Activated CD4-positive, alpha-beta T cell treated with anti-CD3 and anti-CD28 coated beads, Interleukin-2, amount 10 ng/mL, durations not matched to agents 7 days and 5 days (primary cell): ENCODE measurements at regions of chr17 and their contacts with region 1.

Region 1: DNA sequence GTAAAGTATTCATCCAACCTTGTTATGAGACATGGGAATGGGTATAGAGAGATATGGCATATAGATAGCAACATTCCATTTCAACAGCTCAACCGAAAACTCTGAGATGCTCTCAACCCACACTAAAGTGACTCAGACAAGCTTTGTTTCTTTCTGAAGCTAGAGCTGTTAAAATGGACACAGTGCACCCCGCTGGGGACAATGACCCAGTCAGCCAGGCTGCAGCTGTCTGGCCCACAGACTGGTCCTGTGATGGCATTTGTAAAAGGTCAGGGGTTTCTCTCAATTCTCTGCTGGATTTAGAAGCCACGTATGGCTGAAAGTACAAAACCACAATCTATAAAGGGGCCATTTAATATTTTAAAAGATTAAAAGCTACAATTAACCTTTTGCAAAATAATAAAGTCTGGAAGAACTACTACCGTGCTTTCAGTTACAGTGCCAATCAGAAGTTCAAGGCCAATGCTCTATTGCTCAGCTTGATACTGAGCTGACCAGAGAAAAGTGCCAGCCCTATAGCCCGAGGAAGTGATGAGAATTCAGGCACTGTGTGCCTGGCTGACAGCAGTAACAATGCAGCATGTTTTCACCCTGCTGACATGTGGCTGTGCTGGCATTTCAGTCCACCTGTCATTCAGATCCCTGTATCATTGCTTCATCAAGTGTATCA is 60.2 kb downstream of the TEX2 start:
- DNase-seq: no peak
- H3K4me3 Mint-ChIP-seq: no peak overlapping the region
- H3K27ac Mint-ChIP-seq: no peak overlapping the region
- H3K4me1 Mint-ChIP-seq: peaks cover 22% of the 10 kb centered on the region
- H3K27me3 Mint-ChIP-seq: no peaks in the 10 kb centered on the region

Region 2: DNA sequence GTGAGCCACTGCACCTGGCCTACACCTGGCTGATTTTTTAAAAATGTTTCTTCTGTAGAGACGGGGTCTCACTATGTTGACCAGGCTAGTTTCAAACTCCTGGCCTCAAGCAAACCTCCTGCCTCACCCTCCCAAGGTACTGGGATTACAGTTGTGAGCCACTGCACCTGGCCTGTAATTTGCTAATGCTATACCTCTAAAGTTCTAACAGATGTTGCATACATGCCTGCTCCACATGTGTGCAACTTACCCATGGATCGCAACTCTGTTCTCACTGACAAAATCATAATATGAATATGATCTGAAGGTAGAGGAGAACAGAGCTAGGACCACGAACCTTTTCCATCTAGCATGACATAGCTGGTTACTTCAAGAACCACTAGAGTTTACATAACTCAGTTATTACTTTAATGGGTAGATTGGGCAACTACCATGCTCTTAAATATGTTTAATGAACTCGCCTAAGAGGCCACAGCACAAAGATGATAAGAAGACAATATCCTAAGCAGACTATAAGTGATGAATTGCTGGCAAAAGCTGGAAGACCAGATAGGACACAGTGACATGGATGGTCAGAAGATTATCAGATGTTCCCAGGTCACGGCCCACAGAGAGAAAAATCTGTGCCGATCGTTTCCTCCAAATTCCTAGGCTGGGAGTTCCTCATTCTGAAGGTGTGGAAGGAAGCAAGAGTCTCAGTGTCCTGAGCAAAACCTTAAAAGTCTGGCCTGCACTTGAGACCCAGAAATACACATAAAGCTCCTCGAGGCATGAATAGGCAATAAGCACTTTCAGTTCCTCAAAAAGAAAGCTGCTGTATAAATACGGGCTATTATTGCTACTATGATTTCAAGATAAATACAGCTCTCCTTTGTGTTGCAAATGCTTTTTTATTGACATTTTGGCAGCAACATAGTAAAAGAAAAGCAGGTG is 128.8 kb before region 1 on chr17:
- CTCF ChIA-PET with region 1: no interaction called
- POLR2A ChIA-PET with region 1: no interaction called
- DNase-seq: no peak
- H3K4me3 Mint-ChIP-seq: no peak overlapping the region
- H3K27ac Mint-ChIP-seq: no peak overlapping the region
- H3K4me1 Mint-ChIP-seq: peaks cover 26% of the 10 kb centered on the region
- H3K27me3 Mint-ChIP-seq: no peaks in the 10 kb centered on the region

Region 3: GRCh38 chr17:64129764-64130558 is 72.8 kb before region 1 on chr17 and contains the start of gene ERN1:
- CTCF ChIA-PET with region 1: no interaction called
- POLR2A ChIA-PET with region 1: no interaction called
- DNase-seq: peak; percentile 89
- H3K4me3 Mint-ChIP-seq: peak within 1 kb of the TSS; percentile 92
- H3K27ac Mint-ChIP-seq: peak within 1 kb of the TSS; percentile 92
- H3K4me1 Mint-ChIP-seq: peaks cover 53% of the 10 kb centered on the region
- H3K27me3 Mint-ChIP-seq: no peaks in the 10 kb centered on the region
- total RNA-seq, gene ERN1: 50.1 to 57.5 TPM

Region 4: GRCh38 chr17:64466019-64466685 is 263.3 kb after region 1 on chr17:
- CTCF ChIA-PET with region 1: no interaction called
- POLR2A ChIA-PET with region 1: interaction called, 11 read pairs
- DNase-seq: no peak
- H3K4me3 Mint-ChIP-seq: no peak overlapping the region
- H3K27ac Mint-ChIP-seq: no peak overlapping the region
- H3K4me1 Mint-ChIP-seq: peaks cover 2% of the 10 kb centered on the region
- H3K27me3 Mint-ChIP-seq: no peaks in the 10 kb centered on the region